Endothelial cell of umbilical vein (primary cell): ENCODE measurements at regions of chr4 and their contacts with region 1.

Region 1: DNA sequence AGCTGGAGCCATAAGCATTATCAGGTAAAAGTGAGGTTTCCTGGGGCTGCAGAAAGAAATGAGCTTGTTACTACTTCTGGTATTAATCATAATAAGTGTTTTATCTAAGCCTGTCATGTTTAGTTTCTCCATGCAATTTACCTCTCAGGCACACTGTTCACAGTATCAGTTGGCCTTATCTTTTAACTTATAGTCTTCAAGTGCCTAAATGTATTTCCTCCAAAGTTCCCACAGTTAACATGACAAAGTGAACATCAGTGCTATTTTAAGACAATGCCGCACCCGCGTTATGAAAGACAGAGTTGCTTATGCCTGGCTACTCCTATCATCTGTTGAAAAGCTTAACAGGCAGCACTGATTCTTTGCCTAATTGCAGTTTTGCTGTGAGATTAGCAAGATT is 408.7 kb upstream of the FAM241A start:
- DNase-seq: no peak
- H3K4me3 ChIP-seq: no peak overlapping the region
- H3K27ac ChIP-seq: no peak overlapping the region
- H3K4me1 ChIP-seq: no peaks in the 10 kb centered on the region
- H3K27me3 ChIP-seq: peaks cover 2 to 7% of the 10 kb centered on the region in 2 experiments
- CTCF ChIP-seq: no peak
- POLR2A ChIP-seq: no peak

Region 2: DNA sequence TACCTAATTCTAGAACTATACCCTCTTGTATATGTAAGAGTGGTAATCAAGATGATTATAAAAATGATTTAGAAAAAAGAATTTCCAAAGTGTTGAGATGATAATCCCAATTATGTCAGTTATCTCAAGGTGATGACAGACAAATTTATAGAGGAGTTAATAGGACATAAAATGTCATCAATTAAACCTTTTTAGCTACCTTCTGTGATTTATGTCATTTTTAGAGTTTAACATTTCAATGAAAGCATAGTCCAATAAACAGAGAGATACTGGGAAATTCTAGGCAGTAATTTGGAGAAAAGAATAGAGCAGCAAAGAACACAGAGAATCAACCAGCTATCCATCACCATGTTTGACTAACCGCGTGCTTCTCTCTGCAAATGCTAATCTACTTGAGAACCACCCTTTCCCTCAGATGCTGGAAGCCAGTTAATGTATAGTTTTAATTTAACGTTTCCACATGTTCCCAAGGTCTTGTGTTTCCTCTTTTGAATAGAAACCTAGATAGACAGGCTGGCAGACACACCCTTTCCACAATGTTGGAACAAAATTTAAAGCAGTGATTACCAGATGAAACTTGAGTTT is 24.3 kb before region 1 on chr4:
- CTCF ChIA-PET with region 1: interaction called, 11 read pairs
- POLR2A ChIA-PET with region 1: no interaction called
- dilution Hi-C with region 1: no loop called
- intact Hi-C with region 1: no loop called
- DNase-seq: no peak
- H3K4me3 ChIP-seq: no peak overlapping the region
- H3K27ac ChIP-seq: no peak overlapping the region
- H3K4me1 ChIP-seq: no peaks in the 10 kb centered on the region
- H3K27me3 ChIP-seq: peaks cover 0 to 7% of the 10 kb centered on the region in 2 experiments
- CTCF ChIP-seq: no peak
- POLR2A ChIP-seq: no peak

Region 3: GRCh38 chr4:111722213-111722720 is 14.2 kb before region 1 on chr4:
- CTCF ChIA-PET with region 1: no interaction called
- POLR2A ChIA-PET with region 1: no interaction called
- dilution Hi-C with region 1: no loop called
- intact Hi-C with region 1: no loop called
- DNase-seq: no peak
- H3K4me3 ChIP-seq: no peak overlapping the region
- H3K27ac ChIP-seq: no peak overlapping the region
- H3K4me1 ChIP-seq: no peaks in the 10 kb centered on the region
- H3K27me3 ChIP-seq: peaks cover 4 to 5% of the 10 kb centered on the region in 2 experiments
- CTCF ChIP-seq: no peak
- POLR2A ChIP-seq: no peak